Ovary (tissue), 10 donors: ENCODE measurements at regions of chr3 and their contacts with region 1.

Region 1: DNA sequence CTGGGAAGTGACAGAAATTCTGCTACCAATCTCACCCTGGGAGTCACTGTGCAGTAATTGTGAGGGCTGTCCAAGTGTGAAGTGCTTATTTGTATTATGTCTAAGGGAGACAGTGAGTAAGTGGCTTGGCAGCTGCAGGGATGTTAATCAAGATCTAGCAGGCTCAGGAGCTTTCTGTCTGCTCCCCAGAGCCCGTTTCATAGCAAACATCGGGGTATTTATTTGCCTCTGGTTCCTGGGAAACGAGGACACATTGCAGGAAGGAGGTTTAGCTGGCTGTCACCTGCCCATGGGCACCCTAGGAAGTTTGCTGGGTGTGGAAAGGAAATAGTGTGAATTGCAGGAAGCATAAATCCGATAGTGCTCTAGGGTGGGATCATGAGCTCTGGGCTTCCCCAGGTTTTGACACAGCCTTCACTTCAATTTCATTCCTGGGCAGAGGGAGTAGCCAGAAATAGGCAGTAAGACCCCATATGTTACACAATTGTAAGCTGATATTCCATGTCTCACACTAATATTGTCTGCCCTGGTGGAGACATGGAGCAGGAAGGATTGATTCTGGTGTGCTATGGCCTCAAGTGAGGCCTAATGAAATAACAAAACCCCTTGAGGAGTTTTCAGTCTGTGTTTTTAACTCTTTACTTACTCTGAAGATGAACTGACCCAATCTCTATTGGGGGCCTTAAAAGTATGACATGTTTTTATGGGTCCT is 74.1 kb upstream of the MITF start:
- DNase-seq: no peak
- H3K4me3 ChIP-seq: no peak overlapping the region
- H3K27ac ChIP-seq: no peak overlapping the region
- H3K4me1 ChIP-seq: no peaks in the 10 kb centered on the region
- H3K27me3 ChIP-seq: no peaks in the 10 kb centered on the region
- CTCF ChIP-seq: no peak
- EP300 ChIP-seq: no peak
- POLR2A ChIP-seq: no peak

Region 2: GRCh38 chr3:69439643-69440270 is 225.4 kb before region 1 on chr3:
- intact Hi-C with region 1: loop called in 2 of 4 experiments (anchors 10 kb)
- DNase-seq: no peak
- H3K4me3 ChIP-seq: peak overlapping the region; percentile 17
- H3K27ac ChIP-seq: no peak overlapping the region
- H3K4me1 ChIP-seq: no peaks in the 10 kb centered on the region
- H3K27me3 ChIP-seq: no peaks in the 10 kb centered on the region
- CTCF ChIP-seq: peak in 2 of 3 donors; percentile 30 to 46
- EP300 ChIP-seq: no peak
- POLR2A ChIP-seq: no peak

Region 3: GRCh38 chr3:69579306-69580041 is 85.7 kb before region 1 on chr3:
- intact Hi-C with region 1: no loop called
- DNase-seq: no peak
- H3K4me3 ChIP-seq: no peak overlapping the region
- H3K27ac ChIP-seq: no peak overlapping the region
- H3K4me1 ChIP-seq: peaks cover 3% of the 10 kb centered on the region
- H3K27me3 ChIP-seq: no peaks in the 10 kb centered on the region
- CTCF ChIP-seq: no peak
- EP300 ChIP-seq: no peak
- POLR2A ChIP-seq: no peak

Region 4: GRCh38 chr3:69649120-69650065 is 15.8 kb before region 1 on chr3:
- intact Hi-C with region 1: no loop called
- DNase-seq: no peak
- H3K4me3 ChIP-seq: no peak overlapping the region
- H3K27ac ChIP-seq: no peak overlapping the region
- H3K4me1 ChIP-seq: no peaks in the 10 kb centered on the region
- H3K27me3 ChIP-seq: no peaks in the 10 kb centered on the region
- CTCF ChIP-seq: no peak
- EP300 ChIP-seq: no peak
- POLR2A ChIP-seq: no peak